GM18951 (cell line): ENCODE measurements at regions of chr15 and their contacts with region 1.

Region 1: GRCh38 chr15:77118882-77119321 is 48.0 kb upstream of the TSPAN3 start:
- POLR2A ChIP-seq: no peak

Region 2: GRCh38 chr15:77070495-77071304 is 48.2 kb before region 1 on chr15 and contains the start of gene TSPAN3:
- in situ Hi-C with region 1: no loop called
- POLR2A ChIP-seq: peak; percentile 83

Region 3: DNA sequence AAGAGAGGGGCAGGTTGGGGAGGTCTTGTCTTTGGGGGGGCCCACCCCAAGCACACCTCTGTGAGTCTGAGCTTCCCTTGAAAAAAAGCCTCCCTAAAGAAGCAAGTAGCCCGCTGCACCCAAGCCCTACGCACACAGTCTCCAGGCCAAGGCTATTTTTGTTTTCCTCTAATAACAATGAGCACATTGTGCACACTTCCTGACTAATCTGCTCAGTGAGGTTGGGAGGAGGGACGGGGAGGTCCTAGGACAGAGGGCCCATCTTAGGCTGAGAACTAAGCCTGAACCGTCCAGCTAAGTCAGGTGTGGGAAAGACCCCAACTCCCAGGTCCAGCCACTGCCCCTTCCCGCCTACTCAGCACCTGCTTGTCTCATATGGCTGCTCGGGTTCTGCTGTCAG is 389.0 kb after region 1 on chr15:
- in situ Hi-C with region 1: loop called (anchors 10 kb)
- POLR2A ChIP-seq: no peak

Region 4: GRCh38 chr15:77543159-77543882 is 424.4 kb after region 1 on chr15:
- in situ Hi-C with region 1: loop called (anchors 10 kb)
- POLR2A ChIP-seq: peak; percentile 48